CD4-positive, alpha-beta memory T cell (primary cell): ENCODE measurements at regions of chr1 and their contacts with region 1.

Region 1: GRCh38 chr1:193183019-193183627 is 3.3 kb downstream of the B3GALT2 start:
- DNase-seq: peak in 4 of 5 donors; percentile 59 to 64 (median 62)
- H3K4me3 ChIP-seq: peak overlapping the region in 1 of 2 donors; percentile 10
- H3K4me3 Mint-ChIP-seq: peak overlapping the region; percentile 60 to 92 (median 81)
- H3K27ac ChIP-seq: peak overlapping the region; percentile 23
- H3K27ac Mint-ChIP-seq: peak overlapping the region in 4 of 7 donors; percentile 16 to 82 (median 68)
- H3K4me1 ChIP-seq: peaks cover 47% of the 10 kb centered on the region
- H3K4me1 Mint-ChIP-seq: peaks cover 28 to 52% (median 36%) of the 10 kb centered on the region in 4 donors
- H3K27me3 ChIP-seq: no peaks in the 10 kb centered on the region
- H3K27me3 Mint-ChIP-seq: no peaks in the 10 kb centered on the region

Region 2: GRCh38 chr1:193406901-193407300 is 223.8 kb after region 1 on chr1:
- CTCF ChIA-PET with region 1: interaction called, 3 read pairs
- POLR2A ChIA-PET with region 1: interaction called, 8 read pairs
- intact Hi-C with region 1: loop called (anchors 1 kb)
- DNase-seq: peak in 4 of 5 donors; percentile 48 to 63 (median 56)
- H3K4me3 ChIP-seq: no peak overlapping the region
- H3K4me3 Mint-ChIP-seq: peak overlapping the region in 6 of 8 donors; percentile 0 to 29 (median 8)
- H3K27ac ChIP-seq: no peak overlapping the region
- H3K27ac Mint-ChIP-seq: peak overlapping the region in 4 of 7 donors; percentile 15 to 81 (median 52)
- H3K4me1 ChIP-seq: peaks cover 26% of the 10 kb centered on the region
- H3K4me1 Mint-ChIP-seq: peaks cover 21 to 40% (median 29%) of the 10 kb centered on the region in 4 donors
- H3K27me3 ChIP-seq: no peaks in the 10 kb centered on the region
- H3K27me3 Mint-ChIP-seq: no peaks in the 10 kb centered on the region

Region 3: GRCh38 chr1:193754732-193755427 is 571.8 kb after region 1 on chr1:
- CTCF ChIA-PET with region 1: no interaction called
- POLR2A ChIA-PET with region 1: no interaction called
- intact Hi-C with region 1: loop called (anchors 2 kb)
- DNase-seq: no peak
- H3K4me3 ChIP-seq: no peak overlapping the region
- H3K4me3 Mint-ChIP-seq: no peak overlapping the region
- H3K27ac ChIP-seq: no peak overlapping the region
- H3K27ac Mint-ChIP-seq: peak overlapping the region in 1 of 7 donors; percentile 10
- H3K4me1 ChIP-seq: peaks cover 5% of the 10 kb centered on the region
- H3K4me1 Mint-ChIP-seq: peaks cover 2 to 13% (median 3%) of the 10 kb centered on the region in 4 donors
- H3K27me3 ChIP-seq: no peaks in the 10 kb centered on the region
- H3K27me3 Mint-ChIP-seq: no peaks in the 10 kb centered on the region

Region 4: DNA sequence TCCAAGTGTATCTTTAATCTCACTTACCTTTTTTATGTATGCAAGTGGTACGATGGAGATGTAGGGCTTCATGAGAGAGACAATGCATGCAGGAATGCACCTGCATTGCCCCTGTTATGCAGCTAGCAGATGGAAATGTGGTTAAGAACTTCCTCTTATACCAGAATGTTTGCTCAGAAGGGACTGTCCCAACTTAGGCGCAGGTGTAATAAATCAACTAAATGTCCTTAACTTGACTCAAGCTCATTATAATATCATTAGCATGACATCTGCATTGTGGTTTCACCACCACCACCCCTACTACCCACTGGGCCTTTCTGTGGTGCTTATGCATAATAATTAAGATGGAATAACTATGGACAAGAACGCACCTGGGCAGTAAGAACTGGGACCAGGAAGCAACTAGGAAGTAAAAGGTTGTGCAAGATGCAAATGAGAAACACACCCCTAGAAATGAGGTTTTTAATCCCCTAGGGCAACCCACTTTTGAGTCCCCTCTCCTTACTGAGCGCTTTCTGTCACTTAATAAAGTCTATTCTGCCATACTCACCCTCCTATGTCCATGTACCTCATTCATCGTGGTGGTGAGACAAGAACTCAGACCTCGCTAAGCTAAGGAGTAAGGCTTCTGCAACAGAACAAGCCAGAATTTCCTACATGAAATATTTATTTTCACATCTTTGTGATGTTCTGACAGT is 1106.6 kb after region 1 on chr1:
- CTCF ChIA-PET with region 1: interaction called, 28 read pairs
- POLR2A ChIA-PET with region 1: interaction called, 13 read pairs
- intact Hi-C with region 1: no loop called
- DNase-seq: peak; percentile 72 to 89 (median 81)
- H3K4me3 ChIP-seq: peak overlapping the region; percentile 2 to 42
- H3K4me3 Mint-ChIP-seq: peak overlapping the region; percentile 60 to 84 (median 75)
- H3K27ac ChIP-seq: peak overlapping the region; percentile 50
- H3K27ac Mint-ChIP-seq: peak overlapping the region; percentile 12 to 86 (median 75)
- H3K4me1 ChIP-seq: peaks cover 22% of the 10 kb centered on the region
- H3K4me1 Mint-ChIP-seq: peaks cover 22 to 31% (median 24%) of the 10 kb centered on the region in 4 donors
- H3K27me3 ChIP-seq: no peaks in the 10 kb centered on the region
- H3K27me3 Mint-ChIP-seq: no peaks in the 10 kb centered on the region